ENCODE measurements at regions of chr21 and their contacts with region 1.

Region 1: DNA sequence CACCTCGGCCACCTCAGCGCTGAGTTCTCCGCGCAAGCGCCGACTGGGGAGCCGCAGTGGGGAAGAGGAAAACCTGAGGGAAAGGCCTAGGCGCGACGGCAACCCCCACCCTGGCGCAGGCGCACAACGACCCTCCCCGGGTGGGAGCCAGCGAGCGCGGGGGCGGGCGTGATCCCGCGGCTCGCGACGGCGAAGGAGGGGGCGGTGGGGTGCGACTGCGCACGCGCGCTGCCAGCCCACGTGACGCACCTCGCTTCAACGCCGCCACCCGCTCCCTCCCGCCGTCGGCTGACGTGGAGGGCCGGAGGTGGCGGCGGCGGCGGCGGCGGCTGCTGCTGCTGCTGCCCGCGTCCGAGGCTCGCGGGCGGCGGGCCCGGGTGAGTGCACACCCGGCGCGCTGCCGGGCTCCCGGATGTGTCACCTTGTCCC is at the starts of genes PIGP and TTC3:
- DNase-seq: peak; percentile 99
- H3K4me3 Mint-ChIP-seq: peak within 1 kb of the TSS; percentile 94
- H3K27ac Mint-ChIP-seq: peak within 1 kb of the TSS; percentile 96
- H3K4me1 Mint-ChIP-seq: peaks cover 33% of the 10 kb centered on the region
- H3K27me3 Mint-ChIP-seq: peaks cover 5% of the 10 kb centered on the region
- total RNA-seq, gene PIGP: 19.0 and 19.4 TPM in 2 replicates
- total RNA-seq, gene TTC3: 62.4 and 63.0 TPM in 2 replicates

Region 2: DNA sequence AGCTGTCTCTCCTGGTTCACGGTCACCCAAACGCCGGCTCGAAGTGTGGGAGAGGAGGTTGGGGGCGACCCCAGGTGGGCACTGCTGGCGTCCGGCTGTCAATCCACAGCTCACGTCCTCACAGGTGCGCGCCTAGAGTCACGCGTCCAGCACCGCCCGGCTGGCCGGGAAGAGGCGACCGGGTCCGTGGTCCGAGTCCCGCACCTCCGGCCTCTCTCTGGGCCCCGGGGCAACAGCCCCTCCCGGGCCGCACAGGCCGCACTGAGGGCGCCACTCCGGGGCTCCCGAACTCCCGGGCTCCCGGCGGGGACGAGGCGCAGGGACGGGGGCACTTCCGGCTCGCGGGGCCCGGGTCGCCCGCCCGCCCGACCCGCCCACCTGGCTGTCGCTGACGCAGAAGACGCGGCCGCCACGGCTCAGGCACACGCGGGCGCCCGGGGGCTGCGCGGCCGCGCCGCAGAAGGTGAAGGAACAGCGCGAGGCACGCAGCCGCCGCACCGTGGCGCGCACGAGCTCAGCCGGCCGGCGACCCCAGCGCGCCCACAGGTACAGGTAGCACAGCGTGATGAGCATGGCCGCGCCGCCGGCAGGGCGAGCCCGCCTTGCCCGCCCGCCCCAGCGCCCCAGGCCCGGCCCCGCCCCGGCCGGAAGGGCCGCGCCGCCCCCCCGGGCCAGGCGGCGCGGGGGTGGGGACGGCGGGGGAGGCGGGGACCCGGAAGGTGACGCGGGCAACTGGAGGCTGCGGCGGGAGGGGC is 106.8 kb before region 1 on chr21 and contains the start of gene HLCS:
- intact Hi-C with region 1: loop called (anchors 2 kb)
- DNase-seq: peak; percentile 92
- H3K4me3 Mint-ChIP-seq: peak within 1 kb of the TSS; percentile 86
- H3K27ac Mint-ChIP-seq: peak within 1 kb of the TSS; percentile 91
- H3K4me1 Mint-ChIP-seq: peaks cover 14% of the 10 kb centered on the region
- H3K27me3 Mint-ChIP-seq: no peaks in the 10 kb centered on the region
- total RNA-seq, gene HLCS: 15.3 and 16.5 TPM in 2 replicates

Region 3: GRCh38 chr21:37130971-37131370 is 58.0 kb after region 1 on chr21:
- intact Hi-C with region 1: no loop called
- DNase-seq: no peak
- H3K4me3 Mint-ChIP-seq: no peak overlapping the region
- H3K27ac Mint-ChIP-seq: no peak overlapping the region
- H3K4me1 Mint-ChIP-seq: peaks cover 7% of the 10 kb centered on the region
- H3K27me3 Mint-ChIP-seq: no peaks in the 10 kb centered on the region

Region 4: GRCh38 chr21:37220981-37221664 is 148.1 kb after region 1 on chr21:
- intact Hi-C with region 1: loop called (anchors 10 kb)
- DNase-seq: peak; percentile 98
- H3K4me3 Mint-ChIP-seq: peak overlapping the region; percentile 85
- H3K27ac Mint-ChIP-seq: peak overlapping the region; percentile 95
- H3K4me1 Mint-ChIP-seq: peaks cover 43% of the 10 kb centered on the region
- H3K27me3 Mint-ChIP-seq: peaks cover 2% of the 10 kb centered on the region

Region 5: GRCh38 chr21:37267269-37268184 is 194.5 kb after region 1 on chr21 and contains the start of gene VPS26C:
- intact Hi-C with region 1: loop called (anchors 1 kb)
- DNase-seq: peak; percentile 100
- H3K4me3 Mint-ChIP-seq: peak within 1 kb of the TSS; percentile 97
- H3K27ac Mint-ChIP-seq: peak within 1 kb of the TSS; percentile 98
- H3K4me1 Mint-ChIP-seq: peaks cover 34% of the 10 kb centered on the region
- H3K27me3 Mint-ChIP-seq: peaks cover 2% of the 10 kb centered on the region
- total RNA-seq, gene VPS26C: 52.8 and 60.0 TPM in 2 replicates

Region 6: DNA sequence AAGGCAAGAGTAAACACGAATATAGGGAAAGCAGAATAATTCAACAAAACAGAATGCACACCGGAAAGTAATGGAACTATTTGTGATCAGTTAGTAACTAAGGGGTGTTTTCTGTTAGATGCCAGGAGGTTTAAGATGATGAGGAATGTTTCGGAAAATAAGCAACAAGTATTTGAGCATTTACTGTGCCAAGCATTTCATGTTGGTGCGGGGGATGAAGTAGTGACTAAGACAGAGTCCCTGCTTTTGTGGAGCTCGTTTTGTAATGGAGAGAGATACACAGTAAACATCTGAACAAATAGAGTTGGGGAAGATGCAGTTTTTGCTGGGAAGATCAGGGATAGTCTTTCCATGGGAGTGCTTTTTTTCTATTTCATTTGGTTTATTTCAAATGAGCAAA is 372.2 kb after region 1 on chr21:
- intact Hi-C with region 1: loop called (anchors 10 kb)
- DNase-seq: no peak
- H3K4me3 Mint-ChIP-seq: no peak overlapping the region
- H3K27ac Mint-ChIP-seq: no peak overlapping the region
- H3K4me1 Mint-ChIP-seq: peaks cover 47% of the 10 kb centered on the region
- H3K27me3 Mint-ChIP-seq: no peaks in the 10 kb centered on the region

Region 7: DNA sequence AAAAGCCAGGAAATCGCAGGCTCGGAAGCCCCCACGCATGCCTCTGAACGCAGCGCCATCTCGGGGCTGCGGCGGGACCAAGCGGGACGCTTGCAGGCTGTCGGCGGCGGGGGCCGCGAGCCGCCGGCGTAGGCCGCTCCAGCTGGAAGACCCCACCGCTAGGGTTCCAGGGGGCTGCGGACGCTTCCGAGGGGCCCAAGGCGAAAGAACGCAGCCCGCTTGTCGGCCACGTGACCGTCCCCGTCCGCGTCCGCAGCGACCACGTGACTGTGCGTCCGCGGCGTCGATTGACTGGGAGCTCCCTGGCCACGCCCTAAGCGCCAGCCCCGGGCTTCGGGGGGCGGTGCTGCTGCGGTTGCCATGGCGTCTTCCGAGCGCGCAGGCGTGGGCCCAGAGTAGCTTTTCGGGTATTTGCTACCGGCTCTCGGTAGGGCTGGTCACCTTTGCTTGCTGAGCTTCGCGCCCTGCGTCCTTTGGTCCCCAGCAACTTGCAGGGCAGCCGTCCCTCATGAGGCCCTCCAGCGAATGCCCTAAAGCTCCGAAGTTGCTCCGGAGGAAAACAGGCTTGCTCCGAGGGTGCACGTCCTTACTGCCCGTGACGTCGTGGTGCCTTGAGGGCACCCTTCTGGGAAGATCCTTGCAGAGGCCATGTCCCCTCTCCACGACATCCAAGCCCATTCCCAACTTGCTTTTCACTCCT is 490.8 kb after region 1 on chr21:
- intact Hi-C with region 1: loop called (anchors 2 kb)
- DNase-seq: peak; percentile 98
- H3K4me3 Mint-ChIP-seq: peak overlapping the region; percentile 94
- H3K27ac Mint-ChIP-seq: peak overlapping the region; percentile 100
- H3K4me1 Mint-ChIP-seq: peaks cover 23% of the 10 kb centered on the region
- H3K27me3 Mint-ChIP-seq: peaks cover 9% of the 10 kb centered on the region

Measured in activated CD4-positive, alpha-beta T cell treated with anti-CD3 and anti-CD28 coated beads, Interleukin-2, amount 10 ng/mL, durations not matched to agents 24 days and 14 days (primary cell).